Heart left ventricle (tissue), 16 donors: ENCODE measurements at regions of chr14 and their contacts with region 1.

Region 1: DNA sequence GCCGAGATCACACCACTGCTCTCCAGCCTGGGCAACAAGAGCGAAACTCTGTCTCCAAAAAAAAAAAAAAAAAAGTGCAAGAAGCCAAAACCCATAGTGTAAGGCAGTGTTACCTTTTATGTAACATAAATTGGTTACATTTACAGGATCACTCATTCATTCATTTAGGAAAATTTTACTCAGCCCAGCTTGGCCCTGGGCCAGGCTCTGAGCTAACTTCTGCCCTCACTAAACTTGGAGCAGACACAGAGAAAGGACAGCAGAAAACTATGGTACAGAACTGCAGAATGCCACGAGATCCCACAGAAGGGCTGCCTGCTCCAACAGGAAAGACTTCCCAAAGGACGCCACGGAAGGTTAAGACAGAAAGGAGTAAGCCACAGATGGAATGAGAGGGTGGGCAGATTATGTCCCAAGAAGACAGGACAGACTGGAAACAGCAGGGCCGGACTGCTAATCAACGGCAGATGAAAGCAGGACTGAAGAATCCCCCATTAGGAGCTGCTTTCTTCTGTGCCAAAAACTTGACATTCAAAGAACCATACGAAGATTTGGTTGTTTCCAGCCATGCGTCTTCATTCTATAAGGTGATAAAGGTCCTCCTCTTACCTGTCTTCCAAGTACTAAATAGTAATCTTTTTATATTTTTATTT is 18.9 kb downstream of the PPP1R13B start:
- DNase-seq: peak in 4 of 5 donors; percentile 32 to 47 (median 37)
- ATAC-seq: peak in 3 of 4 donors; percentile 38 to 52 (median 38)
- H3K4me3 ChIP-seq: peak overlapping the region in 2 of 12 donors; percentile 7 to 16
- H3K27ac ChIP-seq: peak overlapping the region in 10 of 12 donors; percentile 5 to 76 (median 60)
- H3K4me1 ChIP-seq: peaks cover 0 to 67% (median 25%) of the 10 kb centered on the region in 12 donors
- H3K27me3 ChIP-seq: no peaks in the 10 kb centered on the region
- CTCF ChIP-seq: no peak
- POLR2A ChIP-seq: no peak

Region 2: DNA sequence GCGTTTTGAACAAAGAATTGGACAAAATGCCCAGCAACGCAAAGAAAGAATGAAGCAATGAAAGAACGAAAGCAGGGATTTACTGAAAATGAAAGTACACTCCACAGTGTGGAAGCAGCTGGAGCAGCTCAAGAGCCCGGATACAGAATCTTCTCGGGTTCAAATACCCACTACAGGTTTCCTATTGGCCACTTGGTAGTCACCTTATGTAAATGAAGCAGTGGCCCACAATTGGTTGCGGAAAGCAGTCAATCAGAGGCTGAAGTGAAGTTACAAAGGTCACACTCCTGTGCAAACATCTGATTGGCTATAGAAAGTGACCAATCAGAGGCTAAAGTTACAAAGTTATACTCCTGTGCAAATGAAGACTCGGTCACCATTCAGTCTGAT is 33.9 kb after region 1 on chr14:
- intact Hi-C with region 1: loop called in 1 of 10 experiments (anchors 5 kb)
- DNase-seq: no peak
- ATAC-seq: no peak
- H3K4me3 ChIP-seq: no peak overlapping the region
- H3K27ac ChIP-seq: peak overlapping the region in 8 of 12 donors; percentile 43 to 85 (median 70)
- H3K4me1 ChIP-seq: peaks cover 0 to 38% (median 5%) of the 10 kb centered on the region in 12 donors
- H3K27me3 ChIP-seq: no peaks in the 10 kb centered on the region
- CTCF ChIP-seq: no peak
- POLR2A ChIP-seq: no peak